Mucosa of descending colon (tissue), 3 donors: ENCODE measurements at regions of chr5 and their contacts with region 1.

Region 1: DNA sequence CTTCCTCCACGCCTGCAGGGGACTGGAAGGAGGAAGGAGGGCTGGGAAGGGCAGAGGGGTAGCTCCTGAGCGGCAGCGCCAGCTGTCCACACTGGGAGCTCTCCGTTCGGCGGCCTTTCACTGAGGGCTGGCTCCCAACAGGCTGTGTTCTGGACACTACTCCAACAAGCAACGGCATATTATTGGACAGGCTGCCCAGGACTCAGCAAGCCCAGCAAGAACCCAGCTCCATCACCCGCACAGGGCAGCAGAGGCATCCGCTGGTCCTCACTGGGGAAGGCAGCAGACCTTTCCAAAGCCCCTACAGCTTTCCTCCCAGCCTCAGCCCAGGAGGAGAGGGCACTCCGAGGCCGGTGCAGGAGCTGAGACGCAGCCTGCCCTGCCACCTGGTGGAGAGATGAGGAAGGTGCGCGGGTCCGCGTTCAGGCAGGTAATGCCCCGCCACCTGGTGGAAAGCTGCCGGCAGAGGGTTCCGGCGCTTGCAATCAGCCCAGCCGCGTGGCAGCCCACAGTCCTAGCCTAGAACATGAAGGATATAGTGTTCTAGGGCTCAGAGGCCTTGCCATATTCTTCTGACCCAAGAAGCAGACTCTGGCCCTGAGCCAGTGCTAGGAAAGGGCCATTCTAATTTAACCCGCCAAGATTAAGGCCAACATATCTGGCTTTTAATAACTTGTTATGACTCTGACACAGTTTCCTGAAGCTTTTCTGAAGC is 74.4 kb downstream of the NRG2 start:
- DNase-seq: peak; percentile 82 to 94 (median 93)
- ATAC-seq: peak; percentile 100
- H3K4me3 ChIP-seq: no peak overlapping the region
- H3K4me1 ChIP-seq: no peaks in the 10 kb centered on the region
- CTCF ChIP-seq: peak; percentile 98

Region 2: GRCh38 chr5:139863855-139864558 is 104.7 kb before region 1 on chr5:
- intact Hi-C with region 1: loop called in 1 of 2 experiments (anchors 10 kb)
- DNase-seq: peak in 2 of 3 donors; percentile 66 to 82
- ATAC-seq: peak; percentile 70
- H3K4me3 ChIP-seq: no peak overlapping the region
- H3K4me1 ChIP-seq: no peaks in the 10 kb centered on the region
- CTCF ChIP-seq: peak; percentile 88